PC-3 (cell line): ENCODE measurements at regions of chr22 and their contacts with region 1.

Region 1: DNA sequence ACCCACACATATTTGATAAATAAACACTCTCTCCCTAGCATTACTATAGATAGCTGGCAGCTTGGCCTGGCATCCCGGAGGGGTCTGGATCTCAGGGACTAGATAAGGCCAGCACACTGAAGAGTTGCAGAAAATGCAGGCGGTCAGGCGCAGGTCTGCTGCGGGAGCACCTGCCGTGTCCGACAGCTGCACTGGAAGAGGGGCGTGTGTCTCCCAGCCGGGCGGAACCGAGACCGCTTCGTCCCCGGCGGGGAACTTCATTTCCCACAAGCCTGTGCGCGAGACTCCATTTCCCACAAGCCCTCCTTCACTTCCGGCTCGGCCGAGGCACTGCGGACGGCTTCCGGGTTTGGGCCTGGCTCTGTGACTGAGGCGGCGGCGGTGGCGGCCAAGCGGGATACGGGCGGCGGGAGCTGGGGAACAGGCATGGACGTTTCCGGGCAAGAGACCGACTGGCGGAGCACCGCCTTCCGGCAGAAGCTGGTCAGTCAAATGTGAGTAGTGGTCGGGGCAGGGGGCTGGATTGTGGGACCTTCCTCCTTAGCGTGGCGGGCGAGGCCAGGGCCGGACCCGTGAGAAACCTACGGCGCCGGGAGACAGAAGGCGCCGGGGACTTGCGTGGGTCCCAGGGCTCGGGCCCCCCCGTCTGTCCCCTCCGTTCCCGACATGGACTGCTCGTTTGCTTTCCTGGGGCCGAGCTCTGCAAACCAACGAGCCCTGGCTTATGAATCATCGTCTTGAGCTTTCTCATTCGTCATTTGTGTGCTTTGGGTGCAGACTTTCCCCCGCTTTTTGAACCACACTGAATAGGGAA is at the start of gene MED15:
- DNase-seq: peak; percentile 83
- ATAC-seq: peak; percentile 61
- H3K4me3 ChIP-seq: peak within 1 kb of the TSS; percentile 80
- H3K27ac ChIP-seq: peak within 1 kb of the TSS; percentile 100
- H3K4me1 ChIP-seq: peaks cover 44% of the 10 kb centered on the region
- H3K27me3 ChIP-seq: no peaks in the 10 kb centered on the region
- CTCF ChIP-seq: no peak
- total RNA-seq, gene MED15: 55.9 and 71.3 TPM in 2 replicates

Region 2: DNA sequence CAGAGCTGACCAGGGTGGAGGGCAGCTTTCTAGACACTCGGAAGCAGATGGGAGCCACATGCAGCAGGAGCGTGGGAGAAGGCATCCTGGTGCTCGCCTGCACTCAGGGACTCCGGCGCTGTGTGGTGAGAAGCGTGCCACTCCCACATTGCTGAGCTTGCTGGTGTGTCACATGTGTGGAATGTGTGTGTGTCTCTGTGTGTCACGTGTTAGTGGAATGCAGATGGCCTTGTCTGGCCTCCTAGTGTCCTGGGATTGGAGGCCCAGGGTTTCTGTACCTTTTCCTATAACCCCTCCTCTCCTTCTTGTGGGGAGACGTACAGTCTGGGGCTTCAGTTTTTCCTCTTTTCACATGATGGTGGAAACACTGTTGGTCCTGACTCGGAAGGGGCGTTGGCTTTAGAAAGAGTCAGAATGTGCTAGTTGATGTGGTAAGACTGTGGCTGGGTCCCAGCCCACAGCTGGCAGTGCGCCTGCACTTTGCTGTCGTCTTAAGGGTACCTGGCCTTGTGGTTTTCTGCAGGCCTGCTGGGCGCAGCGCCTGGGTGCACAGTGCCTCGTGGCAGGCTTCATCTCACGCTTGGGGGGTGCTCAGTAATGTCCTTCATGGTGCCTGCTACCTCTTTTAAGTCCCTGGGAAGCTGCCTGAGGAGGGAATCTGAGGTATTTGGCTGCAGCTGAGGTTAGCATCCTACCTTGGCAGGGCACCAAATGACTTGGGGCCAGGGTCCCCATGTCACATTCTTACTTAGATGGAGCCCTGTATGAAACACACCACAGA is 61.7 kb after region 1 on chr22:
- CTCF ChIA-PET with region 1: no interaction called
- POLR2A ChIA-PET with region 1: no interaction called
- intact Hi-C with region 1: loop called (anchors 5 kb)
- DNase-seq: peak; percentile 90
- ATAC-seq: peak; percentile 73
- H3K4me3 ChIP-seq: no peak overlapping the region
- H3K27ac ChIP-seq: peak overlapping the region; percentile 89
- H3K4me1 ChIP-seq: peaks cover 61% of the 10 kb centered on the region
- H3K27me3 ChIP-seq: no peaks in the 10 kb centered on the region
- CTCF ChIP-seq: no peak

Region 3: GRCh38 chr22:20663137-20663828 is 155.8 kb after region 1 on chr22:
- CTCF ChIA-PET with region 1: no interaction called
- POLR2A ChIA-PET with region 1: no interaction called
- intact Hi-C with region 1: no loop called
- DNase-seq: no peak
- ATAC-seq: no peak
- H3K4me3 ChIP-seq: no peak overlapping the region
- H3K27ac ChIP-seq: no peak overlapping the region
- H3K4me1 ChIP-seq: no peaks in the 10 kb centered on the region
- H3K27me3 ChIP-seq: peaks cover 27% of the 10 kb centered on the region
- CTCF ChIP-seq: no peak